PC-9 (cell line): ENCODE measurements at regions of chr1 and their contacts with region 1.

Region 1: DNA sequence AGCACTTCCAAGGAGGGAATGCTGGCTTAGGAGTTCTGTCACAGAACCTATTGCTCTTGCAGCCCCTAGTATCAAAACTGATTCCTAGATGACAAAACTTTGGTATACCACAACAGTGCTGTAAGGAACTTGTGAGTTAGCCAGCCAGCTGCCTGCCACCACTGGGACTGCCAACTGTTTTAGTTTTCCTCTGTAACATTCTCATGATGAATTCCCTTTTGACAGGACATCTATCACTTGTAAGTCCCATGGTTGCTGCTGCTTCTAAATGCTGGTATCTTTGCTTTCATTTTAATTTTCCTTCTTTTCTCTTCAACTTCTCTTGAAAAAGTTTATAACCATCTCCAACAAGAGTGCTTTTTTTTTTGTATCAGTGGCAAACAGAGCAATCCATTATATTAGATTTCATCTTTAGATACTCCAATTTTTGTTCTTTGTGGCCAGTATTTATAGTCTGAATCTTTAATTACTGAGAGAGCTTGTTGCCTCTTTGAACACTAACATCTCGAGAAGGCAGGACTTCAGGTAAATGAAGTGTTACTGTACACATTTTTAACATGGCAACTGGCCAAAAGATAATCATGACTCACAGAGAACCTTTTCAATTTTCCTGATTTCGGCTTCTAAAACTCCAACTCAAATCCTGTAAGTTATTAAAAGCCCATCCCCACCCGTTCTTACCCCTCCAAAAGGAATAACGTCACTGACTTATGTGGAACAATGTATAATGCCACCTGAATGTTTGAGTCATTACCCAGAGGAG is 19.8 kb downstream of the DBT start:
- DNase-seq: no peak
- H3K4me3 ChIP-seq: no peak overlapping the region
- H3K27ac ChIP-seq: no peak overlapping the region
- H3K4me1 ChIP-seq: no peaks in the 10 kb centered on the region
- H3K27me3 ChIP-seq: no peaks in the 10 kb centered on the region
- CTCF ChIP-seq: no peak

Region 2: DNA sequence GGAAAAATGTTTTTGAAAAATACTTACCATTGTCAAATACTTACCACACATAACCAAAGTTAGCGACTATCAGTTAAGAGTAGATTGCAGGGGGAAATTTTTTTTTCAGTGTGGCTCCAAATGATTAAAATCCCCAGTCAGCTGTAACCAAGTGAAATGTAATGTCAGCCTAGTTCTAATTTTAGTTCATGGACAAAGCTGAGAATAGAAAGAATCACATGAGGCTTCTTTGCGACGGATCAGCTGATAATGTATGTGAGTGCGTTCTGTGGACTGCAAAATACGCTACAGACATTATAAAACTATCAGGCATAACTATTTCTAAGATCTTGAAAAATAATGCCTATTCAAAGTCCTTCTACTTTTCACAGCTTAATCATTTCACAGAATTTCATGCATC is 51.8 kb before region 1 on chr1 and contains the start of gene LRRC39:
- CTCF ChIA-PET with region 1: no interaction called
- POLR2A ChIA-PET with region 1: no interaction called
- intact Hi-C with region 1: no loop called
- DNase-seq: peak in 1 of 2 experiments; percentile 31
- H3K4me3 ChIP-seq: no peak within 1 kb of the TSS
- H3K27ac ChIP-seq: no peak within 1 kb of the TSS
- H3K4me1 ChIP-seq: no peaks in the 10 kb centered on the region
- H3K27me3 ChIP-seq: no peaks in the 10 kb centered on the region
- CTCF ChIP-seq: no peak
- total RNA-seq, gene LRRC39: 0.75 and 0.85 TPM in 2 replicates

Region 3: GRCh38 chr1:100206301-100206700 is 23.6 kb before region 1 on chr1:
- CTCF ChIA-PET with region 1: no interaction called
- POLR2A ChIA-PET with region 1: no interaction called
- intact Hi-C with region 1: no loop called
- DNase-seq: no peak
- H3K4me3 ChIP-seq: no peak overlapping the region
- H3K27ac ChIP-seq: no peak overlapping the region
- H3K4me1 ChIP-seq: no peaks in the 10 kb centered on the region
- H3K27me3 ChIP-seq: no peaks in the 10 kb centered on the region
- CTCF ChIP-seq: no peak

Region 4: GRCh38 chr1:100249537-100250257 is 19.8 kb after region 1 on chr1 and contains the start of gene DBT:
- CTCF ChIA-PET with region 1: no interaction called
- POLR2A ChIA-PET with region 1: interaction called, 14 read pairs
- intact Hi-C with region 1: no loop called
- DNase-seq: peak; percentile 91 to 97
- H3K4me3 ChIP-seq: peak within 1 kb of the TSS; percentile 62
- H3K27ac ChIP-seq: peak within 1 kb of the TSS; percentile 37
- H3K4me1 ChIP-seq: peaks cover 16% of the 10 kb centered on the region
- H3K27me3 ChIP-seq: no peaks in the 10 kb centered on the region
- CTCF ChIP-seq: no peak
- total RNA-seq, gene DBT: 13.9 and 16.0 TPM in 2 replicates

Region 5: GRCh38 chr1:100353071-100353801 is 123.4 kb after region 1 on chr1:
- CTCF ChIA-PET with region 1: no interaction called
- POLR2A ChIA-PET with region 1: no interaction called
- intact Hi-C with region 1: no loop called
- DNase-seq: peak in 1 of 2 experiments; percentile 37
- H3K4me3 ChIP-seq: peak overlapping the region; percentile 63
- H3K27ac ChIP-seq: no peak overlapping the region
- H3K4me1 ChIP-seq: peaks cover 31% of the 10 kb centered on the region
- H3K27me3 ChIP-seq: no peaks in the 10 kb centered on the region
- CTCF ChIP-seq: no peak